ENCODE measurements at regions of chr2 and their contacts with region 1.

Region 1: DNA sequence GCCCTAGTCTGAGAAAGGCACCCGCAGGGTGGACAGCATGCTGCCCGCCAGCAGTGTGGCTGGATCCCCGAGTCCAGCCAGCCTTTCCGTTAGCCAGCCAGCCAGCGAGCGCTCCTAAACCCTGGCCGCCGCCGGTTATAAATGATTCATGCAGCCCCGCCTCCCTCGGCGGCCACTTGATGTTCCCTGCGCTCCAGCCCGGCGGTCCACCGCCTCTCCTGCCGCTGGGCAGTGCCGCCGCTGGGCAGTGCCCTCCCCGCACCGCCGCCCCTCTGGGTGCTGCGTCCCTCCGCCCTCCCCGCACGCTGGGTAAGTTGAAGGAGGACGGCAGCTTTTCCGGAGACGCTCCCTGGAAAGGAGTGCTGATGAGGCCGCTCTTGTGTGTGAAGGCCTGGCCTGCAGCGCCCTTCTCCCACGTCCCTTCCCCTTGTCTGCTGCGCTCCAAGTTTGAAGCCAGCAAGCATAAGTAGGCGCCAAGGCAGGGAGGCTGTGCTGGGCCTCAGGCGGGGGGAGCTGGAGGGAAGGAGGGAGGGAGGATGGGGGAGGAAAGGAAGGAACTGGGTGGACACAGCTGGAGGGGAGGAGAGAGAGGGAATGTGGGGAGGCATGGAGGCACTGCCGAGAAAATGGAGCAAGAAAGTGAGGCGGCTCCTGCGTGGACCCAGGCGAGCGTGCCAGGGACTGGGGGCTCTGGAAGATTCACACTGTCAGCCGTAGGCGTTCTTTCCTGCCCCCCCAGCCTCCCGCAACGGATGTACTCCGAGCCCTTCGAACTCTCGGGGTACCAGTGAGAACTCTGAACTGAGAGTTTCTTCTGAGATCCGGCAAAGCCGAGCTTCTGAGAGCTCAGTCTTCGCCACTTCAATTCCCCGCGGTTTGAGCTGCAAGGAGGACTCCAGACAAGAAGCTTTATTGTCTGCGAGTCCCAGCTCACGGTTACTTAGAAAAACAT is 131.9 kb downstream of the GLI2 start:
- DNase-seq: peak; percentile 74
- H3K4me3 Mint-ChIP-seq: no peak overlapping the region
- H3K27ac Mint-ChIP-seq: no peak overlapping the region
- H3K4me1 Mint-ChIP-seq: peaks cover 13% of the 10 kb centered on the region
- H3K27me3 Mint-ChIP-seq: no peaks in the 10 kb centered on the region
- CTCF ChIP-seq: no peak

Region 2: GRCh38 chr2:120934574-120935340 is 67.2 kb after region 1 on chr2:
- CTCF ChIA-PET with region 1: no interaction called
- POLR2A ChIA-PET with region 1: no interaction called
- intact Hi-C with region 1: loop called (anchors 2 kb)
- DNase-seq: peak; percentile 86
- H3K4me3 Mint-ChIP-seq: peak overlapping the region; percentile 10
- H3K27ac Mint-ChIP-seq: no peak overlapping the region
- H3K4me1 Mint-ChIP-seq: peaks cover 52% of the 10 kb centered on the region
- H3K27me3 Mint-ChIP-seq: no peaks in the 10 kb centered on the region
- CTCF ChIP-seq: no peak

Region 3: GRCh38 chr2:121242175-121242875 is 374.8 kb after region 1 on chr2:
- CTCF ChIA-PET with region 1: no interaction called
- POLR2A ChIA-PET with region 1: no interaction called
- intact Hi-C with region 1: no loop called
- DNase-seq: no peak
- H3K4me3 Mint-ChIP-seq: no peak overlapping the region
- H3K27ac Mint-ChIP-seq: no peak overlapping the region
- H3K4me1 Mint-ChIP-seq: no peaks in the 10 kb centered on the region
- H3K27me3 Mint-ChIP-seq: no peaks in the 10 kb centered on the region
- CTCF ChIP-seq: no peak